RWPE1 (cell line): ENCODE measurements at regions of chr2 and their contacts with region 1.

Region 1: GRCh38 chr2:121530212-121530705 is 421 bp upstream of the RNU4ATAC start:
- DNase-seq: peak; percentile 76
- H3K27ac ChIP-seq: peak overlapping the region; percentile 100
- CTCF ChIP-seq: no peak

Region 2: DNA sequence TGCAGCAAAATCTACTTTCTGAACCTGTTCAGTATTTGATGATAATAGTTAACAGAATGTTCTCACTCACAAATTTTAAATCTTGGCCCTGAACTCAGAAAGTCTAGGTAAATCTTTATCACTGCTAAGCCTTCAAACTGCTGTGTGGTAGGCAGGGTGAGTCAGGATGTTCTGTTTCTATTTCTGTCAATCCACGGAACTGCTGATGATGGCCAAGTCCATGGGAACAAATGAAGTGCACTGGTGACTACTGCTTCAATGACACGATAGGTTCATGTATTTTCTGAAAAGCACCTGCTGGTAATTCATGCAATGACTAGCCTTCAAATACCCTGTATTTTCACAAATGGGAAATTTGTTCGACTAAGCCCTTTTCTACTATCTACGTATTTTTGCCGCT is 192.2 kb after region 1 on chr2:
- CTCF ChIA-PET with region 1: interaction called, 11 read pairs
- POLR2A ChIA-PET with region 1: interaction called, 3 read pairs
- DNase-seq: peak; percentile 68
- H3K27ac ChIP-seq: no peak overlapping the region; the same call in 1 of the 2 replicates
- CTCF ChIP-seq: no peak